OCI-LY7 (cell line): ENCODE measurements at regions of chr7 and their contacts with region 1.

Region 1: DNA sequence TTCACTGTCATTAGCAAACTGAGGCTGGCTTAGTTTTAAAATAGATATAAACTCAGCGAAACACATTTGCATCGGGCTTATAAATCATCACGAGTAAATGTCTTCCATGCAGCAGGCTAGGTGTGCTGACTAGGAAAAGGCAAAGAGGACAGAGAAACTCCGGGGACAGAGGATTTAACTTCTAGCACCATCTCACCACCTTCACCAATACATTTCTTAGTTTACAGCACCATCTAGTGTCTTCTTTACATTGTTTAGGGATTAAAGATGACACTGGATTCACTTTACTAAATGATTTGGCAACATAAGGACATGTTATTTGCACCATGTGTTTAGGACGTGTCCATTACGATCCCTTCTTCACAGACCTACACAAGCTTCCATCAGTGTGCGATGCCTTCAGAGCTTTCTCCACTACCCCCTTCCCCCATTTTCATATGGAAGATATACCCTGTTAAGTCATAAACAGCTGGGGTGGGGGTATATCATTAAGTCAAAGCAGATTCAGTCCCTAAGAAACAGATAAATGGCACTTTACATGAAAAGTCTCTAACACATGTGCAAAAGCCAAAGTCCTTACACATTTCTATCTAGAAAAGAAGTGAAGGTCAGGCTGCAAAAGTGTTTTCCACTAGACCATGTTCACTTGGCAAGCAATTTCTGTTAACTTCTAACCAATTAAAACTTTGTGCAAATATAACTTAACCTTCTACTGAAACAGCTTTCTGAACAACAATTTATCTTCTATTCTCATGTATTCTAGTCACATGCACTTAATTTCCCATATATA is 103.3 kb downstream of the GRB10 start:
- DNase-seq: peak; percentile 48
- H3K4me3 ChIP-seq: no peak overlapping the region
- H3K27ac ChIP-seq: no peak overlapping the region
- H3K4me1 ChIP-seq: no peaks in the 10 kb centered on the region
- CTCF ChIP-seq: peak; percentile 70

Region 2: DNA sequence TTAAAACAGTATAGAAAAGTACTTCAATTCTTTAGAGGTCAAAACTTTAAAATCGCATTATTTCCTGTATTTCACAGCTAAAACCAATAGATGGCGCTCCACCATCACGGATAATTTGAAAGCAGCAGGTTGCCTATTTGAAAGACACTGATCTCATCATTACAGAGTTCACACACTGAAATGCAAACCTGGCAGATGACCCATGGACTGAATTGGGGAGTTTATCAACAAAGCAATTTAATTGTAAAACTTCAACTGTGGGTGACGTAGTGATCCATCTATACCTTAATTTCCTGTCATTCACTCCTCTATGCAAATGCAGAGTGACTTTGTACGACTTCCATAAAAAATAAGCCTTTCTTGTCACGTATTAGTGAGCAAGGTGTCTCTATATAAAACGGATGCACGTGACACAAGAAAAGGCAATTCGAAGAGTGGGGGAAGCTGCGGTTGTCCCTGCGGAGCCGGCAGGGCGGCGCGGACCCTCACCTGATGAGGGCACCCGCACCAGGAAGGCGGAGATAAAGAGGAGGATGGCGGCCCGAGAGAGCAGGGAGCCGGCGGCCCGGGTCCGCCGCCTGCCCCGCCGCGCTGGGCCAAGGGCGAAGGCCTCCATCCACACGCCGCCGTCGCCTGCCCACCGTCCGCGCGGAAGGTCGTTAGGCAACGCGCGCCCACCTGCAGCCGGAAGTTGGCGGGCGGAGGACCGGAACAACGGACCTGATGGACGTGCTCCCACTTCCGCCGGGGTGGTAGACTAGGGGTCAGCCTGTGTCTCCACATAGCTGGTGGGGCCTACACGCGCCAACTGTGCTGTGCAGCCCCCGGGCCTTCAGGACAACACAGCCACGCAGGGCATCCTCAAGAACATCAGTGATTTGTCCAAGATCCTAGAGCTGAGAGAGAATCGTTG is 586.6 kb before region 1 on chr7 and contains the start of gene ZPBP:
- CTCF ChIA-PET with region 1: no interaction called
- POLR2A ChIA-PET with region 1: no interaction called
- intact Hi-C with region 1: loop called (anchors 2 kb)
- DNase-seq: peak; percentile 69
- H3K4me3 ChIP-seq: no peak within 1 kb of the TSS
- H3K27ac ChIP-seq: no peak within 1 kb of the TSS
- H3K4me1 ChIP-seq: peaks cover 5% of the 10 kb centered on the region
- CTCF ChIP-seq: peak; percentile 99
- total RNA-seq, gene ZPBP: not detected in 2 replicates

Region 3: GRCh38 chr7:50467817-50468610 is 211.4 kb before region 1 on chr7:
- CTCF ChIA-PET with region 1: no interaction called
- POLR2A ChIA-PET with region 1: no interaction called
- intact Hi-C with region 1: loop called (anchors 2 kb)
- DNase-seq: peak; percentile 61
- H3K4me3 ChIP-seq: no peak overlapping the region
- H3K27ac ChIP-seq: no peak overlapping the region
- H3K4me1 ChIP-seq: no peaks in the 10 kb centered on the region
- CTCF ChIP-seq: peak; percentile 86